SK-N-SH (cell line): ENCODE measurements at regions of chr4 and their contacts with region 1.

Region 1: GRCh38 chr4:123661080-123661737 is 264.6 kb downstream of the SPRY1 start:
- DNase-seq: peak; percentile 24
- H3K4me3 ChIP-seq: no peak overlapping the region
- H3K27ac ChIP-seq: no peak overlapping the region
- H3K4me1 ChIP-seq: no peaks in the 10 kb centered on the region
- H3K27me3 ChIP-seq: no peaks in the 10 kb centered on the region
- CTCF ChIP-seq: peak; percentile 75
- EP300 ChIP-seq: no peak
- RAD21 ChIP-seq: peak; percentile 64

Region 2: DNA sequence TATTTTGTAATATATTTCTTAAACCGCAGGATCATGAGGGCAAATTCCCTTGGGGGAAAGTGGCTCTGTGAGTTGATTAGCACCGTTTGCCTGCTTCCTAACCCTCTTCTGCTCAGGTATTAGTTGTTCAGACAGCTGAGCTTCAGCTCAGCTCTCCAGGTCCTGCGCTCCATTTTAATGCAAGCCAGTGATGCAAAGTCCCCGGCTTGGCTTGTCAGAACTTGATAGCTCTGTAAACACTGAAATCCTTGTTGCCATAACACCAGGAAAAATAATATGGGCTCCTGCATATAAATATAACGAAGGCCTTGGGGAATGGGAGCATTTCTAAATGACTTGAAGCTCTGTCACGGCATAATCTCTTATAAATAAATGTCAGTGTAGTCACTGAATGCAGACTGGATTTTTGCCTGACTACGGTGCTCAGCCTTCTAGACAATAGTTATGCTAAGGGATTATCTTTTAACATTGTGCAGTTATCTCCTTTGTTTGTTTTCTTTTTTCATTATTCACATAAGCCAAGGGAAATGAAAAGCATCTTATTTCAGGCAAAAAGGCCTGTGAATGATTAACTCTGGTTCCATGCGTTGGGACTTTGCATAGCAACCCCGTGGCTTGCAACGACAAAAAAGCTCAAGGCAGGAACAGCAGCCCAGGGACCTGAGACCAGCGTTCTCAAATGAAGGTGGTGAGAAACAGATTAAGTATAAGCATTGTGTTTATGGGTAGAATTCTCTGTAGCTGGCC is 11.4 kb before region 1 on chr4:
- CTCF ChIA-PET with region 1: interaction called, 17 read pairs
- POLR2A ChIA-PET with region 1: no interaction called
- DNase-seq: no peak
- H3K4me3 ChIP-seq: no peak overlapping the region
- H3K27ac ChIP-seq: peak overlapping the region; percentile 22 to 36; a peak in 2 of 4 replicates
- H3K4me1 ChIP-seq: peaks cover 0 to 4% of the 10 kb centered on the region in 2 experiments; a peak in 1 of 4 replicates
- H3K27me3 ChIP-seq: no peaks in the 10 kb centered on the region
- CTCF ChIP-seq: no peak
- EP300 ChIP-seq: no peak
- RAD21 ChIP-seq: no peak

Region 3: DNA sequence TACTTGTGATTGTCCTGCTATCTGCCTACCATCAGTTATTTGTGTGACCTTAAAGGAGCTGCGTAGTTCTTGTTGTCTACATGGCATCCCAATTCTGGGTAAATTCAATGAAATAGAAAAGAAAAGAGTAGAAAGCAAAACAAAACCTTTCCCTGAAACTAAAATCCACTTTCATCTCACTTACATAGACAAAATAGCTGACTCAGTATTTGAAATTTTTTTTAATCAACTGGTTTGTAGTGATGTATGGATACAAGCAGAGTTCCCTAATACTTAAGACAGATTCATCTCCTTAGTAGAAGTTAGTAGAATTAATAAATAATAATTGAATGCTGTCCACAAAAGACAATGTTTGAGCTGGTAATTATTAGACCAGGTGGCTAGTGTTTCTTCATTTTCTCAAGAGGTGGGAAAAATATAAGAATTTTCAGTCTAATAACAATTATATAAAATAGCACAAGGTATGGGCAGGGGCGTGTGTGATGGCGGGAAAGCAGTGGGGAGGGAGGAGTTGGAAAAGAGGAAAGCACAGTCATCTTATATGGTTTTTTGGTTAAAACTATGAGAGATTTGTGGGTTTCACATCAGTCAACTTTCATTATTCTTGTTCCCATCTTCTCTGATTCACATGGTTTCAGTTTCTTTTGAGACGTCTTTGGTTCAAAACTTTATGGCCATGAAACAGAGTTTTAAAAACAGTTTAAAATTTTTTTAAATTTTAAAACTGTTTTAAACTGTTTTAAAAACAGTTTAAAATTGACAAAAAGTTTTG is 10.6 kb after region 1 on chr4:
- CTCF ChIA-PET with region 1: interaction called, 15 read pairs
- POLR2A ChIA-PET with region 1: no interaction called
- DNase-seq: no peak
- H3K4me3 ChIP-seq: no peak overlapping the region
- H3K27ac ChIP-seq: no peak overlapping the region
- H3K4me1 ChIP-seq: peaks cover 0 to 8% of the 10 kb centered on the region in 2 experiments; a peak in 1 of 4 replicates
- H3K27me3 ChIP-seq: no peaks in the 10 kb centered on the region
- CTCF ChIP-seq: no peak
- EP300 ChIP-seq: no peak
- RAD21 ChIP-seq: no peak